ENCODE measurements at regions of chr10 and their contacts with region 1.

Region 1: GRCh38 chr10:5889624-5890451 is at the starts of genes ANKRD16 and FBH1:
- H3K4me3 ChIP-seq: peak within 1 kb of the TSS; percentile 82
- H3K27ac ChIP-seq: peak within 1 kb of the TSS; percentile 85
- H3K4me1 ChIP-seq: 0 out of 2 replicates have a peak, but pooled peaks cover 4% of the 10 kb centered on the region
- CTCF ChIP-seq: no peak

Region 2: DNA sequence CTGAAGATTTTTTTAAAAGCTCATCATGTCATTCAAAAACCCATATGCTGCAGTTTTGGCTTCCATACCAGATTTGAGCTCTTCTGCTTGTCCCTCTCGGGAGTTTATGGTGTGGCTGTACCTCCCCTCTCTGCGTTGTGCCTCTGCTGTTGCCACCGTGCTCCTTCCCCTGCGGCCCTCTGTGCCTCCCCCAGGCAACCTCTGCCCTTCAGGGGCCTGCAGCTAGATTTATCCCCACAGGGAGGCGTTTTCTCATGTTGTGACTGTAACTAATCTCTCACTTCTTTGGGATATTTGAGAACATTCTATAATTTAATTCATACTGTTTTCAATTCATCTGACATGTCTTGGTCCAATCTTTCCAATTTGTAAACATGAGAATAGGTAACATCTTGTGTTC is 152.5 kb before region 1 on chr10:
- CTCF ChIA-PET with region 1: no interaction called
- POLR2A ChIA-PET with region 1: no interaction called
- H3K4me3 ChIP-seq: no peak overlapping the region
- H3K27ac ChIP-seq: no peak overlapping the region
- H3K4me1 ChIP-seq: no peaks in the 10 kb centered on the region; the same call in 1 of the 2 replicates
- CTCF ChIP-seq: no peak

Region 3: DNA sequence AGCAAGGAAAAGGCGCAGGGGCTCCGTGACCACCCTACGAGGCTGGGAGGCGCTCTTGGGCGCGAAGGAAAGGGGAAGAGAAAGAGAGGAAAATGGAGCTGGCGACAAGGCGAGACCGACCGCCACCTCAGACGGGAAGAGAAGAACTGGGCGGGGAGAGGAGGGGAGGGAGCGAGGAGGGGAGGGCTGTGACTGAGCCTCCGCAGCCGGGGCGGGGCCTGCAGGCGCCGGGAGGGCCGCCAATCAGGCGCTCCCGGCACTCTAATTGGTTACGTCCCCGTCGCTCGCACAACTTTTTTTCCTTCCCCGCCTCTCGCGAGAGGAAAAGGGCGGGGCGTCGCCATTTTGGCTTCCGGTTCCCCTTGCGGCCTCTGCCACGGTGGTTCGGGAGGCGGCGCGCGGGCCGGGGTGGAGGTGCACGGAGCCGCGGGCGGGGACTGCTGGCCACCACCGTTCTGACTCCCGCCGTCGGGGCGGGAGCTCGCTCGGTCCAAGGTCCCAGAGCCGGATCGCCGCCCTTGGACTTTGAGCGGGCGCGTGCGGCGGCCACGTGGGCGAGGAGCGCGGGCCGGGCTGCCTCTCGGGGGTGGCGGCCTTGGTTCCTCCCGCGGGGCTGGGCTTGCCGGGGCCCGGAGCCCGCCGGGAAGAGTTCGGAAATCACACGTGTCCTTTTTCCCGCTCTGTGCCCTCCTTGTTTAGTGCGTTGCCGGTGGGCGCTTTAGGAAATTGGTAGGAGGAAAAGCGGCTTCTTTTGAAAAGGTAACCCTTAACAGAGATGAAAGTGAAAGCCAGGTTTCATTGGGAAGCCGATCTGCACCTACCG is 76.3 kb before region 1 on chr10 and contains the start of gene GDI2:
- CTCF ChIA-PET with region 1: no interaction called
- POLR2A ChIA-PET with region 1: interaction called, 35 read pairs
- H3K4me3 ChIP-seq: peak within 1 kb of the TSS; percentile 98
- H3K27ac ChIP-seq: peak within 1 kb of the TSS; percentile 93
- H3K4me1 ChIP-seq: peaks cover 7% of the 10 kb centered on the region; the same call in 1 of the 2 replicates
- CTCF ChIP-seq: no peak

Region 4: GRCh38 chr10:5873515-5873995 is 16.3 kb before region 1 on chr10:
- CTCF ChIA-PET with region 1: interaction called, 19 read pairs
- POLR2A ChIA-PET with region 1: interaction called, 8 read pairs
- H3K4me3 ChIP-seq: no peak overlapping the region
- H3K27ac ChIP-seq: no peak overlapping the region
- H3K4me1 ChIP-seq: no peaks in the 10 kb centered on the region
- CTCF ChIP-seq: no peak

Region 5: GRCh38 chr10:5987747-5988146 is 97.9 kb after region 1 on chr10:
- CTCF ChIA-PET with region 1: no interaction called
- POLR2A ChIA-PET with region 1: no interaction called
- H3K4me3 ChIP-seq: no peak overlapping the region
- H3K27ac ChIP-seq: no peak overlapping the region
- H3K4me1 ChIP-seq: no peaks in the 10 kb centered on the region
- CTCF ChIP-seq: no peak